K562 (cell line): ENCODE measurements at regions of chr3 and their contacts with region 1.

Region 1: GRCh38 chr3:178385280-178385952 is 150.8 kb upstream of the KCNMB2 start:
- DNase-seq: peak; percentile 16 to 48 (median 28)
- ATAC-seq: peak; percentile 66; the same call in 2 of the 3 replicates
- H3K4me3 ChIP-seq: no peak overlapping the region
- H3K27ac ChIP-seq: no peak overlapping the region
- H3K4me1 ChIP-seq: no peaks in the 10 kb centered on the region; a peak in 1 of 5 replicates
- H3K27me3 ChIP-seq: no peaks in the 10 kb centered on the region
- CTCF ChIP-seq: peak; percentile 29 to 77 (median 72); a peak in 5 of 6 replicates
- EP300 ChIP-seq: 0 out of 2 replicates have a peak, but pooled peaks have one; percentile 3
- POLR2A ChIP-seq: no peak
- RAD21 ChIP-seq: peak; percentile 91

Region 2: DNA sequence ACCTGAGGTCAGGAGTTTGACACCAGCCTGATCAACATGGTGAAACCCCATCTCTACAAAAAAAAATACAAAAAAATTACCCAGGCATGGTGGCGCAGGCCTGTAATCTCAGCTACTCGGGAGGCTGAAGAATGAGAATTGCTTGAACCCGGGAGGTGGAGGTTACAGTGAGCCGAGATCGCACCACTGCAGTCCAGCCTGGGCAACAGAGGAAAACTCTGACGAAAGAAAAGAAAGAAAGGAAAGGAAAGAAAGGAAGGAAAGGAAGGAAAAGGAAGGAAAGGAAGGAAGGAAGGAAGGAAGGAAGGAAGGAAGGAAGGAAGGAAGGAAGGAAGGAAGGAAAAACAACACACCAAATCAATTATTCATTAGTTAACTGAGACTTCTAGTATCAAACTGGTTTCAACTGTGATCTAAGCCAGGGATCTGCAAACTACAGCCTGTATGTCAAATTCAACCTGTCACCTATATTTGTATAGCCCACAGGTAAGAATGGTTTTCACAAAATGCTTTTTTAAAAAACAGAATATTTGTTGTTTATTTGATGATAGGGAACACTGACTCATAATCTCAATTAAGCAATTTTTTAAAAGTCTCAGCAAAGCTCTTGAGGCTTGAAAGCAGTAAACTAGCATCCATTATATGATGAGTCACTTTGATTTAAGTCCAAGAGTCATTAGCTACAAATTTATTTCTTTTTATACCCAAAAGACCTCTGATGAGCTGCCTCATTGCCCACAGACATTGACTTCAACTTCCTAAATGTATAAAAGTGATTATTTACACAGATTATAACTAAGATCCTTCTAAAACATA is 1315.7 kb before region 1 on chr3:
- CTCF ChIA-PET with region 1: no interaction called
- POLR2A ChIA-PET with region 1: no interaction called
- in situ Hi-C with region 1: no loop called
- intact Hi-C with region 1: loop called (anchors 10 kb)
- DNase-seq: no peak
- ATAC-seq: no peak
- H3K4me3 ChIP-seq: no peak overlapping the region
- H3K27ac ChIP-seq: no peak overlapping the region
- H3K4me1 ChIP-seq: peaks cover 0 to 10% of the 10 kb centered on the region in 2 experiments; a peak in 1 of 5 replicates
- H3K27me3 ChIP-seq: no peaks in the 10 kb centered on the region
- CTCF ChIP-seq: no peak
- EP300 ChIP-seq: no peak
- POLR2A ChIP-seq: no peak
- RAD21 ChIP-seq: no peak

Region 3: DNA sequence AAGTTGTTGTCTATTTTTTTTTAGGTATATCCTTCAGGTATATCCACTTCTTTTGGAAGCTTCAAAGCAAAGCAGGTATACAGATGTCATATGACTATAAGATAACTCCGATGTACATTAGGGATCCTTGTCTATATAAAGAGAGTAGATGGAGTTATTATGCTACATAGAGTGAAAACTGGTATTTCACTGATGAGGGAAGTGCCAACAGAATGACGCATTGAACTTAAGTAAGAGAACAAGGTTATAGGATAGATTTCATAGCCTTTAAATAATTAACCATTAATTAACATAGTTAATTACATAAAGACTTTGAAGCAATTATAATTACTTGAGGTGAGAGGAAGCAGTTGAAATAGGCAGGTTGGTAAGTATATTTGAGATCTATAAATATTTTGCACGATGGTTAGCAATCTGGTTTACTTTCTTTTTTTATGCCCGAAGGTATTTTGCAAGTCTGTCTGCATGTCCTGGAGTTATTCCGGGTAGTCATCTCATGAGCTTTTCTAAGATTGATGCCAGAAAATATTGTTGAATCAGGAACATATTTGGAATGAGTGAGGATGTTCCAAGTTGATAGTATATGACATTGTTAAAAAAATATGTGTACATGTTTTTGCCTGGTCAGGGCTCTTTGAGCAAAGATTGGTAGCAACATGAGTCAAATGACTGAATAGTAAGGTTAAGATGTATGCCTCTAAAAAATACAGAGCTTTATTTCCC is 148.7 kb before region 1 on chr3:
- CTCF ChIA-PET with region 1: no interaction called
- POLR2A ChIA-PET with region 1: no interaction called
- in situ Hi-C with region 1: no loop called
- intact Hi-C with region 1: no loop called
- DNase-seq: no peak
- ATAC-seq: no peak
- H3K4me3 ChIP-seq: no peak overlapping the region
- H3K27ac ChIP-seq: no peak overlapping the region
- H3K4me1 ChIP-seq: no peaks in the 10 kb centered on the region
- H3K27me3 ChIP-seq: no peaks in the 10 kb centered on the region
- CTCF ChIP-seq: no peak
- EP300 ChIP-seq: no peak
- POLR2A ChIP-seq: no peak
- RAD21 ChIP-seq: no peak